Left cardiac atrium (tissue), 4 donors: ENCODE measurements at regions of chr17 and their contacts with region 1.

Region 1: GRCh38 chr17:8745586-8746500 is 1.2 kb upstream of the CCDC42 start:
- DNase-seq: peak; percentile 77
- ATAC-seq: peak; percentile 94 to 95

Region 2: DNA sequence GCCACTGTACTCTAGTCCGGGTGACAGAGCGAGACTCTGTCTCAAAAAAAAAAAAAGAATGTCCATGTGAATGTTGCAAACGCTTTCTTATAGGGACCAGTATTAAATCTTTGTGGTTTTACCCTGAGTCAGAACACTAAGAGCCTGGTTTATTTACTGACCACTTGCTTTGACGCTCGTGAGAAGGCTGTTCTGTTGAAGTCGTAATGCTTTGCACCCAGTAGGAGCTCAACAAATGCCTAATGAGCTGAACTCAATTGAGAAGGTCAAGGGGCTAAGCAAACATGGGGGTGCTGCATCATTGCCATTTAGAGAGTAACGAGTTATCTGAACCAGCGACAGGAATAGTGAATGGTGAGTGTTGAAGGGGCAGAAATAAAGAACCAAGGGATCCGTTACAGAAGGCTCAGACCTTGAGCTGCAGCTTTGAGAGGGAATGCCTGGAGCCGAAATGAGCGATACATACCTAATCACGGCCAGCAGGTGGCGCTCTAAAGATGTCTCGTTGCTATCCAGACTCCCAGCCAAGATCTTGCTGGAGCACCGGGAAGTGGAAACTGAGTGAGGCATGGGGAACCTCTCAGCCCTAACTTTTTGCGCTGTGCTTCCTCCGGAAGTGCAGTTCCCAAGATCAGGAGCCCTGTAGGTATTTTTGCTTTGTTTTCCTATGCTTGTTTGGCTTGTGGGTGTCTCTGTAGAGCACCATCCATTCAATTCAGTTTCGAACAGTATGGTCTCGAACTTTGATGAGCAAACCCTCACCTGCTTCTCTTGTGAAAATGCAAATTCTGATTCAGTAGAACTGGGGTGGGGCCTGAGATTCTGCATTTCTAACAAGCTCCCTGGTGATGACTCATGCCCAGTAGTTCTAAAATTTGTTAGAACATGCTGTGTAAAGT is 335.6 kb before region 1 on chr17:
- intact Hi-C with region 1: loop called (anchors 5 to 10 kb)
- DNase-seq: peak; percentile 88
- ATAC-seq: peak; percentile 93 to 94

Region 3: GRCh38 chr17:8572764-8573163 is 173.1 kb before region 1 on chr17:
- intact Hi-C with region 1: loop called (anchors 2 to 5 kb)
- DNase-seq: no peak
- ATAC-seq: no peak

Region 4: GRCh38 chr17:8673612-8674011 is 72.2 kb before region 1 on chr17:
- intact Hi-C with region 1: loop called in 1 of 2 experiments (anchors 10 kb)
- DNase-seq: peak; percentile 61
- ATAC-seq: peak; percentile 77 to 86